GM13976 (cell line): ENCODE measurements at regions of chr7 and their contacts with region 1.

Region 1: DNA sequence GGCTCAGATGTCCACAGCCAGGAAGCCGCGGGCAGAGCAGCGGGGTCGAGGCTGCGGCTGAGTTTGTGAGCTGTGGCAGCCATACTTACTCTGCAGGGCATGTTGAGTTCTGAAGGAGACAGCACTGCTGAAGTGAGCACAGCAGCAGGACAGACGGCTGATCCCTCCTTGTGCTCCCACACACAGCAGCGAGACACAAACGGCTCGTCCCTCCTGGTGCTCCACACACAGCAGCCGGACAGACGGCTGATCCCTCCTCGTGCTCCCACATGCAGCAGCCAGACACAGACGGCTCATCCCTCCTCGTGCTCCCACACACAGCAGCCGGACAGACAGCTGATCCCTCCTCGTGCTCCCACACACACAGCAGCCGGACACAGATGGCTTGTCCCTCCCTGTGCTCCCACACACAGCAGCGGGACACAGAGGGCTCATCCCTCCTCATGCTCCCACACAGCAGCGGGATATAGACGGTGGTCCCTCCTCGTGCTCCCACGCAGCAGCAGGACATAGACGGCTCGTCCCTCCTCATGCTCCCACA is 305.1 kb downstream of the PTPRN2 start:
- DNase-seq: no peak
- CTCF ChIP-seq: no peak

Region 2: GRCh38 chr7:157432957-157433576 is 849.5 kb before region 1 on chr7:
- in situ Hi-C with region 1: loop called (anchors 25 kb)
- DNase-seq: peak; percentile 78
- CTCF ChIP-seq: peak; percentile 61

Region 3: GRCh38 chr7:158186864-158187693 is 95.5 kb before region 1 on chr7:
- in situ Hi-C with region 1: loop called (anchors 25 kb)
- DNase-seq: peak; percentile 2
- CTCF ChIP-seq: no peak